Activated CD4-positive, alpha-beta memory T cell treated with anti-CD3 and anti-CD28 coated beads, Interleukin-2, amount 10 ng/mL, durations not matched to agents 7 days and 5 days (primary cell): ENCODE measurements at regions of chr1 and their contacts with region 1.

Region 1: GRCh38 chr1:92831762-92832536 is at the start of gene RPL5:
- DNase-seq: peak; percentile 97
- H3K4me3 Mint-ChIP-seq: peak within 1 kb of the TSS; percentile 92
- H3K27ac Mint-ChIP-seq: peak within 1 kb of the TSS; percentile 84
- H3K4me1 Mint-ChIP-seq: peaks cover 50% of the 10 kb centered on the region
- H3K27me3 Mint-ChIP-seq: no peaks in the 10 kb centered on the region
- total RNA-seq, gene RPL5: 660 to 678 TPM

Region 2: GRCh38 chr1:92721886-92722285 is 110.1 kb before region 1 on chr1:
- CTCF ChIA-PET with region 1: no interaction called
- POLR2A ChIA-PET with region 1: no interaction called
- DNase-seq: no peak
- H3K4me3 Mint-ChIP-seq: no peak overlapping the region
- H3K27ac Mint-ChIP-seq: no peak overlapping the region
- H3K4me1 Mint-ChIP-seq: no peaks in the 10 kb centered on the region
- H3K27me3 Mint-ChIP-seq: peaks cover 35% of the 10 kb centered on the region

Region 3: GRCh38 chr1:92759361-92759760 is 72.6 kb before region 1 on chr1:
- CTCF ChIA-PET with region 1: no interaction called
- POLR2A ChIA-PET with region 1: no interaction called
- DNase-seq: no peak
- H3K4me3 Mint-ChIP-seq: no peak overlapping the region
- H3K27ac Mint-ChIP-seq: no peak overlapping the region
- H3K4me1 Mint-ChIP-seq: no peaks in the 10 kb centered on the region
- H3K27me3 Mint-ChIP-seq: peaks cover 19% of the 10 kb centered on the region

Region 4: DNA sequence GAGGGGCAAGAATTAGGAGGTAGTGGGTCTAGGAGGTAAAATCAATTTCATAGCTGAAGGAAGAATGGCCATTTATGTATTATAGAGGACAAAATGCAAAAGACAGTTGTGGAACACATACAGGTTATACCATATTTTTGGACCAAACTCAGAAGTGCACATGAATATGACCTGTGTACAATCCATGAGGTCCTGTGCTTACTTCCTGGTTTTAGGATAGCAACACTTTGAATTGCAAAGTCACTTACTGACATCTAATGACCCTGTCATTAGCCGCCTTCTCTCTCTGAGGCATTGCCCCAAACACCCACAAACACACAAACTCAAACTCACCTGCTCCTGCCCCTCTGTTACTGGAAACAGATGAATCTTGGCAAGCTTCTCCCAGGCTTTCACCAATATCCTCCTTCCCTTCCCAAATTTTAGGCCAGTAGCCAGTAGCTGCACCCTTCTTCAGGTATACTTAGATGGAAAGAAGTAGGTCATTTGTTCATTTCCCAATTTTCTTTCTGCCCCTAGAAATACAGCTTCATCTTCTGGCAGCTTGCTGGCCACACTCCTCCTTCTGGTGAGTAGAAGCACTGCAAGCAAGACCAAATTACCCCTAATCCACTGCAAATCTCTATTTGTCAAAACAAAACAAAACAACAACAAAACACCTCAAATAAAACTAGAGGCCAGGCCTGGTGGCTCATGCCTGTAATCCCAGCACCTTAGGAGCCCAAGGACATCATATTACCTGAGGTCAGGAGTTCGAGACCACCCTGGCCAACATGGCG is 13.8 kb before region 1 on chr1:
- CTCF ChIA-PET with region 1: interaction called, 10 read pairs
- POLR2A ChIA-PET with region 1: interaction called, 3 read pairs
- DNase-seq: peak; percentile 22
- H3K4me3 Mint-ChIP-seq: no peak overlapping the region
- H3K27ac Mint-ChIP-seq: no peak overlapping the region
- H3K4me1 Mint-ChIP-seq: no peaks in the 10 kb centered on the region
- H3K27me3 Mint-ChIP-seq: peaks cover 33% of the 10 kb centered on the region

Region 5: GRCh38 chr1:92843429-92844352 is 11.7 kb after region 1 on chr1:
- CTCF ChIA-PET with region 1: interaction called, 8 read pairs
- POLR2A ChIA-PET with region 1: interaction called, 36 read pairs
- DNase-seq: no peak
- H3K4me3 Mint-ChIP-seq: no peak overlapping the region
- H3K27ac Mint-ChIP-seq: no peak overlapping the region
- H3K4me1 Mint-ChIP-seq: peaks cover 18% of the 10 kb centered on the region
- H3K27me3 Mint-ChIP-seq: no peaks in the 10 kb centered on the region

Region 6: GRCh38 chr1:92858564-92859399 is 26.8 kb after region 1 on chr1:
- CTCF ChIA-PET with region 1: interaction called, 17 read pairs
- POLR2A ChIA-PET with region 1: no interaction called
- DNase-seq: peak; percentile 51
- H3K4me3 Mint-ChIP-seq: peak overlapping the region; percentile 32
- H3K27ac Mint-ChIP-seq: peak overlapping the region; percentile 19
- H3K4me1 Mint-ChIP-seq: peaks cover 27% of the 10 kb centered on the region
- H3K27me3 Mint-ChIP-seq: no peaks in the 10 kb centered on the region

Region 7: GRCh38 chr1:92877792-92878191 is 45.8 kb after region 1 on chr1:
- CTCF ChIA-PET with region 1: no interaction called
- POLR2A ChIA-PET with region 1: interaction called, 10 read pairs
- DNase-seq: no peak
- H3K4me3 Mint-ChIP-seq: peak overlapping the region; percentile 5
- H3K27ac Mint-ChIP-seq: peak overlapping the region; percentile 64
- H3K4me1 Mint-ChIP-seq: peaks cover 28% of the 10 kb centered on the region
- H3K27me3 Mint-ChIP-seq: no peaks in the 10 kb centered on the region

Region 8: DNA sequence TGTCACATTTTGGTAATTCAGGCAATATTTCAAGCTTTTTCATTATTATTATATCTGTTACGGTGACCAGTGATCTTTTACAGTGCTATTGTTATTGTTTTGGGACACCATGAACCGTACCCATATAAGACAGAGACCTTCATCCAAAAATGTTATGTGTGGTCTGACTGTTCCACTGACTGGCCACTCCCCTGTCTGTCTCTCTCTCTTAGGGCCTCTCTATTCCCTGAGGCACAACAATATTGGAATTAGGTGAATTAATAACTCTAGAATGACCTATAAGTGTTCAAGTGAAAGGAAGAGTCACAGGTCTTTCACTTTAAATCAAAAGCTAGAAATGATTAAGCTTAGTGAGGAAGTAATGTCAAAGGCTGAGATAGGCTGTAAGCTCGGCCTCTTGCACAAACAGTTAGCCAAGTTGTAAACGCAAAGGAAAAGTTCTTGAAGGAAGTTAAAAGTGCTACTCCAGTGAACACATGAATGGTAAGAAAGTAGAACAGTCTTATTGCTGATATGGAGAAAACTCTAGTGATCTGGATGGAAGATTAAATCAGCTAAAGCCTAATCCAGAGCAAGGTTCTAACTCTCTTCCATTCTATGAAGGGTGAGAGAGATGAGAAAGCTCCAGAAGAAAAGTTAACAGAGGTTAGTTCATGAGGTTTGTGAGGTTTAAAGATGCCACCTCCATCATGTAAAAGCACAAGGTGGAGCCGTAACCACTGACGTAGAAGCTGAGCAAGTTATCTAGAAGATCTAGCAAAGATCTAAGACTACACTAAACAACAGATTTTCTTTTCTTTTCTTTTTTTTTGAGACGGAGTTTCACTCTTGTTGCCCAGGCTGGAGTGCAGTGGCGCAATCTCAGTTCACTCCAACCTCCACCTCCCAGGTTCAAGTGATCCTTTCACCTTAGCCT is 149.0 kb after region 1 on chr1:
- CTCF ChIA-PET with region 1: interaction called, 12 read pairs
- POLR2A ChIA-PET with region 1: interaction called, 5 read pairs
- DNase-seq: peak; percentile 62
- H3K4me3 Mint-ChIP-seq: peak overlapping the region; percentile 59
- H3K27ac Mint-ChIP-seq: peak overlapping the region; percentile 97
- H3K4me1 Mint-ChIP-seq: peaks cover 58% of the 10 kb centered on the region
- H3K27me3 Mint-ChIP-seq: no peaks in the 10 kb centered on the region

Region 9: DNA sequence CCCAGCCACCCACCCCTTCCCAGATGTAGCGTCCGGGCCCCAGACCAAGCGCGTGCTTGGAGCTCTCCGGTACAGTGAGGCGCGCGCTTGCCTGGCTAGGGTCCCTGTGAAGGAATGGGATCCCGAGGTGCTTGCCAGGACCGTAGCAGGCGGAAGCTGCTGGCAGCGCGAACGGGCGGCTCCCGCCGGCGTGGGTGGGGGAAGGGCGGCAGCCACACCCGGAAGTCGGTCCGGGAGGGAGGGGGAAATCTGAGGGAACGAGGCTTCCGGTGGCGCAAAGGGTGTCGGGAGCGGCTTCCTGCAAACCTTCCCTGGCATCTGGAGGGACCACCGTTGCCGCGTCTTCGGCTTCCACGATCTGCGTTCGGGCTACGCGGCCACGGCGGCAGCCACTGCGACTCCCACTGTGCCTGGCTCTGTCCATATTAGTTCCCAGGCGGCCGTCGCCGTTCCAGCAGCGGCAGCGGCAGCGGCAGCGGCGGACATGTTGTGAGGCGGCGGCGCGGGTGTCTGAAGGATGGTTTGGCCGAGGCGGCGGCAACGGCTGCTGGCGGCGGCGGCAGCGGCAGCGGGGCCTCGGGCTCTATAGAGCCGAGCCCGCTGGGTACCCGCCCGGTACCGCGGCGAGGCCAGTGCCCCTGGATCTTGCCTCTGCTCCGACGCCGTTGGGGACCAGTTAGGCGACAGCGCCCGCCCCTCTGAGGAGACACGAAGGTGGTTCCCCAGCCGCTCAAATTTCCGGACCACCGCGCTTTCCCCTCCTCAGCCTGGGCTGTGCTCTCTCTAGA is 513.9 kb after region 1 on chr1 and contains the start of gene DR1:
- CTCF ChIA-PET with region 1: no interaction called
- POLR2A ChIA-PET with region 1: interaction called, 10 read pairs
- DNase-seq: peak; percentile 92
- H3K4me3 Mint-ChIP-seq: peak within 1 kb of the TSS; percentile 99
- H3K27ac Mint-ChIP-seq: peak within 1 kb of the TSS; percentile 97
- H3K4me1 Mint-ChIP-seq: peaks cover 26% of the 10 kb centered on the region
- H3K27me3 Mint-ChIP-seq: no peaks in the 10 kb centered on the region
- total RNA-seq, gene DR1: 100 to 104 TPM